Endothelial cell of umbilical vein (primary cell): ENCODE measurements at regions of chrX and their contacts with region 1.

Region 1: GRCh38 chrX:53481816-53482465 is 47.8 kb upstream of the HSD17B10 start:
- DNase-seq: peak; percentile 49
- H3K4me3 ChIP-seq: no peak overlapping the region
- H3K27ac ChIP-seq: no peak overlapping the region
- H3K4me1 ChIP-seq: no peaks in the 10 kb centered on the region
- H3K27me3 ChIP-seq: peaks cover 0 to 2% of the 10 kb centered on the region in 2 experiments
- CTCF ChIP-seq: peak; percentile 54 to 69
- POLR2A ChIP-seq: no peak

Region 2: DNA sequence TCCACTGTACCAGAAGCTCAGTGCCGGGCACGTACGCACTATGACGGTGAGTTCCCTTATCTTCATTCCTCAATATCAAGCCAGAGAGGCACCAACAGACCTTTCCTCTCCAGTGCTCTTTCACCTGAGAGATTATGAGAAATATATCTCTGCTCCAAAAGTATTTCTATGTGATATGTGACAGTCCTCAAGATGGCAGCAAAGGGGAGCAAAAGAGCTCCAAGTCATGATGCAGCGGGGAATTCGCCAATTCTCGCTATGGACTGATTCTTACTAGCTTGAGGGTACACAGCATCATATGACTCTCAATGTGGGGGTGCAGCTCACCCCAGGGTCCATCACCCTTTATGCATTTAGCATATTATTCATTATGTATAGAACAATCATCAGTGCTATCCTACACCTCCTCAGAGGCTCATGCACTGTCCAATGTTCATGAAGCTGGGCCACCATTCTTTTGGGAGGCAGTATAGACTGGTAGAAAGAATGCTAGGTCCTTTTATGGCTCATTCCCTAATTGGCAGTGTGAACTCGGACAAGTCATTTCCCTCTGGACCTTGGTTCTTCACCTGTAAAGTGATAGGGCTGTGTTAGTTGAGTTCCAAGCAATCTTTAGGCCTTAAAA is 187.8 kb before region 1 on chrX:
- CTCF ChIA-PET with region 1: interaction called, 14 read pairs
- POLR2A ChIA-PET with region 1: no interaction called
- dilution Hi-C with region 1: no loop called
- intact Hi-C with region 1: no loop called
- DNase-seq: peak; percentile 3
- H3K4me3 ChIP-seq: no peak overlapping the region
- H3K27ac ChIP-seq: no peak overlapping the region
- H3K4me1 ChIP-seq: no peaks in the 10 kb centered on the region
- H3K27me3 ChIP-seq: no peaks in the 10 kb centered on the region
- CTCF ChIP-seq: no peak
- POLR2A ChIP-seq: no peak

Region 3: DNA sequence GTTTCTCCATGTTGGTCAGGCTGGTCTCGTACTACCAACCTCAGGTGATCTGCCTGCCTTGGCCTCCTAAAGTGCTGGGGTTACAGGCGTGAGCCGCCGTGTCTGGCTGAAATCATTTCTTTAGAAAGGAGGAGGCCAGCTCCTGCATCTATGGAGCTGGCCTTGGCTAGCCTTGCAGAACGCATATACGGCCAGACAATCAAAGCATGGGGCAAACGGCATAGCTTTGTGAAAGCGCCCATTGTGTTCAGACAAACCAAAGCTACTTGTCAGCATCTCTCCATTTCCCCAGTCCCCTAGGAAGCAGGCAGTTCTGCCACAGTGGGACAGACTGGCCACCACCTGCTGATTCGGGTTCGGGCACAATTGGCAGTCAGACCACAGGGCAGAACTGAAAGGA is 151.6 kb before region 1 on chrX:
- CTCF ChIA-PET with region 1: no interaction called
- POLR2A ChIA-PET with region 1: no interaction called
- dilution Hi-C with region 1: no loop called
- intact Hi-C with region 1: no loop called
- DNase-seq: no peak
- H3K4me3 ChIP-seq: no peak overlapping the region
- H3K27ac ChIP-seq: no peak overlapping the region
- H3K4me1 ChIP-seq: peaks cover 16% of the 10 kb centered on the region
- H3K27me3 ChIP-seq: peaks cover 3 to 10% of the 10 kb centered on the region in 2 experiments
- CTCF ChIP-seq: no peak
- POLR2A ChIP-seq: no peak

Region 4: DNA sequence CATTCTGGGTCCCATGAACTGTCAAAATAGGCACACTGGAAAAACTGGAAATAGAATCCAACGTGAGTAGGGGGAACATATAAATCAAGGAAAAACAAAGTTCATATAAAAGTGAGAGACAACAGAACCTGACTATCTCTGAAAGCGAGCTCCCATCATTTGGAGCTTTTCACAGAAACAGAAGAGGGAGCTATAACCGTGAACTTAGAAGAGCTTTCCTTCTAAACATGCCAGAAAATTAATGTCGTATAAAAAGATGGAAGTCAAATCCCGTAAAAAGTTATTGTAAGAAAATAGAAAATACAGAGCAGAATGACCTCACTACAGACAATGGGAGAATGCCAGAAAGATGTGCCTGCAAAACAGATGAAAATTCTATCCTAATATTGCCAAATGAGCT is 23.9 kb before region 1 on chrX:
- CTCF ChIA-PET with region 1: interaction called, 14 read pairs
- POLR2A ChIA-PET with region 1: no interaction called
- dilution Hi-C with region 1: no loop called
- intact Hi-C with region 1: no loop called
- DNase-seq: no peak
- H3K4me3 ChIP-seq: no peak overlapping the region
- H3K27ac ChIP-seq: no peak overlapping the region
- H3K4me1 ChIP-seq: no peaks in the 10 kb centered on the region
- H3K27me3 ChIP-seq: peaks cover 0 to 3% of the 10 kb centered on the region in 2 experiments
- CTCF ChIP-seq: no peak
- POLR2A ChIP-seq: no peak

Region 5: DNA sequence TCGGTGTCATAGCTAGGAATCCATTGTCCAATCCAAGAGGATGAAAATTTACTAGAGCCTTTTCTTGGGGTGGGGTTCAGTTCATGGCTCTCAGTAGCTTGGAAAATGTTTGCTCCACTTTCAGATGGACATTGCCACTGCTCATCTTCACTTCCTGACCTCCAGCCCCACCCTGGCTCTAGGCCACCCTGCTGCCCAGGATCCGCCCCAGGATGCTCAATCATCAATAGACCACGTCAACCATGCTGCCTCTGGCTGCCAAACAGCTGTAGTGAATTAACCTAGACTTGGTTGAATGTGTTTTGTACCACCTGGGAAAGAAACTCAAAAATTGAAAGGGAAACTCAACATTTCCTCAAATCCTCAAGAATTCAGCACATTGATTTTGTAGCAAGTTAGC is 10.6 kb before region 1 on chrX:
- CTCF ChIA-PET with region 1: interaction called, 16 read pairs
- POLR2A ChIA-PET with region 1: no interaction called
- dilution Hi-C with region 1: no loop called
- intact Hi-C with region 1: no loop called
- DNase-seq: no peak
- H3K4me3 ChIP-seq: no peak overlapping the region
- H3K27ac ChIP-seq: no peak overlapping the region
- H3K4me1 ChIP-seq: no peaks in the 10 kb centered on the region
- H3K27me3 ChIP-seq: no peaks in the 10 kb centered on the region
- CTCF ChIP-seq: no peak
- POLR2A ChIP-seq: no peak

Region 6: GRCh38 chrX:53494436-53494835 is 12.5 kb after region 1 on chrX:
- CTCF ChIA-PET with region 1: interaction called, 13 read pairs
- POLR2A ChIA-PET with region 1: no interaction called
- dilution Hi-C with region 1: no loop called
- intact Hi-C with region 1: no loop called
- DNase-seq: no peak
- H3K4me3 ChIP-seq: no peak overlapping the region
- H3K27ac ChIP-seq: no peak overlapping the region
- H3K4me1 ChIP-seq: no peaks in the 10 kb centered on the region
- H3K27me3 ChIP-seq: no peaks in the 10 kb centered on the region
- CTCF ChIP-seq: no peak
- POLR2A ChIP-seq: no peak